ENCODE measurements at regions of chr1 and their contacts with region 1.

Region 1: GRCh38 chr1:191857600-191857999 is 300.7 kb upstream of the RGS18 start:
- DNase-seq: no peak
- CTCF ChIP-seq: no peak

Region 2: DNA sequence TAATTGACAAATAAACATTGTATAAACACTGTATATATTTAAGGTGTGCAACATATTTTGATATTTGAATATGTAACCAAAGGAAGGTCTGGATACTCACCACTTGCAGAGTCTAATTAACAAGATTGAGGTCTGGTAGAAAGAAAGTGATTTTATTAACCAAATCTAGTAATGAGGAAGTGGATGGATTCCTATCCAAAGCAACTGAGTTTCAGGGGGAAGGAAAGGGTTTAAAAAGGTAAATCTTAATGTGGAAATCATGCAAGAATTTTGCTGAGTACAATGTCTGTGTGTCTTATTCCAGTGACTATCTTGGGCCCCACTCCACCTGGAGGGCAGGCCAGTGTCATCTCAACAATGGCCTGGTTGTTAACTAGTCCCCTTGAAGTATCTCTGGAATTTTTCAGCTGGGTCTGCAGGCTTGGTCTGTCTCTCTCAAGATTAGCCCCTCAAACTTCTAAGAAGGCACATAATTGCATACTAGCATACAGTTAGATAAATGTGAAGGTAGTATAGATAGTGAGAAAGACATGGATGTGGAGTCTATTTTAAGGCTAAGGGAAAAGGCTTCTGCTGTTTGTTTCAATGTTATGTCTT is 38.0 kb after region 1 on chr1:
- in situ Hi-C with region 1: loop called (anchors 5 kb)
- DNase-seq: no peak
- CTCF ChIP-seq: no peak

Measured in GM13977 (cell line).